Naive thymus-derived CD4-positive, alpha-beta T cell (primary cell): ENCODE measurements at regions of chr5 and their contacts with region 1.

Region 1: DNA sequence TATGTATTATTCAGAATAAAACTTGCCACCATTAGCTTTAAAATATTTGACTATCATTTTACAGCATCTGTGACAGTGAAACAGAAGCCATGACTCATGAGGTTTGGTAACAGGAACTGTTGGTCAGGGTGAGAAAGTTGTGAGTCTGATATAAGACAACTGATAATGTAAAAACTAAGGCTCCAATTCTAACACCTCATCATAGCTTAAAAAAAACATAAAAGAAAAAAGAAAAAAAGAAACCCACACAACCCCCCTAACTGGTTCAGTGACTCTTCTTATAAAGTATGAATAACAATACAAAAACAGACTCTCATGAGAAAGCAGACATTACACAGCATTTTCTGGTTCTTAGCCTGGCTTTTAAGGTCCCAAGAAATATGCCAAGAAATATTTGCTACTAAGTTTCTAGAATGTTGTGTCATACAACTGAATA is 85.8 kb downstream of the MRPS27 start:
- DNase-seq: peak in 1 of 9 donors; percentile 1
- ATAC-seq: peak; percentile 87
- H3K4me3 ChIP-seq: no peak overlapping the region
- H3K4me3 Mint-ChIP-seq: peak overlapping the region in 2 of 10 donors; percentile 1 to 5
- H3K27ac ChIP-seq: no peak overlapping the region
- H3K27ac Mint-ChIP-seq: peak overlapping the region in 1 of 9 donors; percentile 23
- H3K4me1 ChIP-seq: peaks cover 8 to 32% of the 10 kb centered on the region in 2 donors
- H3K4me1 Mint-ChIP-seq: peaks cover 34 to 61% (median 49%) of the 10 kb centered on the region in 7 donors
- H3K27me3 ChIP-seq: no peaks in the 10 kb centered on the region
- H3K27me3 Mint-ChIP-seq: peaks cover 0 to 16% (median 0%) of the 10 kb centered on the region in 5 donors

Region 2: GRCh38 chr5:72194846-72195245 is 39.4 kb before region 1 on chr5:
- CTCF ChIA-PET with region 1: no interaction called
- POLR2A ChIA-PET with region 1: no interaction called
- intact Hi-C with region 1: loop called in 1 of 2 experiments (anchors 5 kb)
- DNase-seq: no peak
- ATAC-seq: peak; percentile 37
- H3K4me3 ChIP-seq: no peak overlapping the region
- H3K4me3 Mint-ChIP-seq: peak overlapping the region in 1 of 10 donors; percentile 49
- H3K27ac ChIP-seq: no peak overlapping the region
- H3K27ac Mint-ChIP-seq: peak overlapping the region in 1 of 9 donors; percentile 59
- H3K4me1 ChIP-seq: peaks cover 0 to 14% of the 10 kb centered on the region in 2 donors
- H3K4me1 Mint-ChIP-seq: peaks cover 0 to 6% (median 0%) of the 10 kb centered on the region in 7 donors
- H3K27me3 ChIP-seq: peaks cover 0 to 4% of the 10 kb centered on the region in 2 donors
- H3K27me3 Mint-ChIP-seq: peaks cover 33 to 73% (median 35%) of the 10 kb centered on the region in 5 donors

Region 3: GRCh38 chr5:72347801-72348305 is 113.6 kb after region 1 on chr5:
- CTCF ChIA-PET with region 1: no interaction called
- POLR2A ChIA-PET with region 1: no interaction called
- intact Hi-C with region 1: no loop called
- DNase-seq: no peak
- ATAC-seq: peak; percentile 65
- H3K4me3 ChIP-seq: no peak overlapping the region
- H3K4me3 Mint-ChIP-seq: no peak overlapping the region
- H3K27ac ChIP-seq: no peak overlapping the region
- H3K27ac Mint-ChIP-seq: no peak overlapping the region
- H3K4me1 ChIP-seq: no peaks in the 10 kb centered on the region
- H3K4me1 Mint-ChIP-seq: peaks cover 3 to 17% (median 9%) of the 10 kb centered on the region in 7 donors
- H3K27me3 ChIP-seq: no peaks in the 10 kb centered on the region
- H3K27me3 Mint-ChIP-seq: no peaks in the 10 kb centered on the region